ENCODE measurements at regions of chr19 and their contacts with region 1.

Region 1: DNA sequence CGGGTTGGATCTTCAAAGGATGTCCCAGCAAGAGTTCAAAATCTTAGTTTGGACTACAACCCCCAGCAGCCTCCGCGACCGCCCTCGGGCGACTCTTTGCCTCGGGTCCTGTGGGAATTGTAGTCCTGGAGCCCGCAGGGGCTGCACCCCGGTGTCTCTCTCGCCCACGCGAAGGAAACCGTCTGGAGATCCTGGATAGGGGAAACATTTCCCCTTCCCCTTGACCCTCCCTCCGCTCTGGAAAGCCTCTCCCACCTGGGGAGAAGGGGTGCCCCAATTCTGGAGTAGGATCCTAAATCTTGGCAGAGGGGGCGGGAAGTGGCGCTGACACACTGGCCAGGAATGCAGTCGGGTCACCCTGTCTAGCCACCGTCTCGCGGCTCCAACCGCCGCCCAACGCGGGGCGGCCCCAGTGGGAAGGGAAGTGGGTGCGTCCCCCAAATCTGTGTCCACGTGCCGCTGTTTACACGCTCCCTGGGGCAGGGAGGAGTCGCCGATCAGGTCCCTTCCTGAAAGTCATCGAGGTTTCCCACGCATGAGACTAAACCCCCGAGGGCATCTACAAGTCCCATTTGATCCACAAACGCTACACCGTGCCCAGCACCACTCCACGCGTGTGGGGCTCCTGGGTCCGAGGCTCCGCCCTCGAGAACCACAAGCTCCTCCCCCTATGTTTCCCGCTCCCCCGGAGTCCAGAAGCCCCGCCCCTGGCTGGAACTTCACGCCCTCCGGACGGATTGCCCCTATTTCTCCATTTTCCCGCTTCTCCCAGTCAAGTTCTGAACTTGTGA is 761 bp upstream of the PPP1R13L start:
- DNase-seq: peak; percentile 95
- H3K4me3 Mint-ChIP-seq: peak overlapping the region; percentile 92
- H3K27ac Mint-ChIP-seq: peak overlapping the region; percentile 89
- H3K4me1 Mint-ChIP-seq: peaks cover 27% of the 10 kb centered on the region
- H3K27me3 Mint-ChIP-seq: no peaks in the 10 kb centered on the region
- CTCF ChIP-seq: no peak

Region 2: GRCh38 chr19:45391871-45392665 is 13.6 kb before region 1 on chr19:
- CTCF ChIA-PET with region 1: interaction called, 10 read pairs
- intact Hi-C with region 1: no loop called
- DNase-seq: no peak
- H3K4me3 Mint-ChIP-seq: no peak overlapping the region
- H3K27ac Mint-ChIP-seq: peak overlapping the region; percentile 44
- H3K4me1 Mint-ChIP-seq: no peaks in the 10 kb centered on the region
- H3K27me3 Mint-ChIP-seq: no peaks in the 10 kb centered on the region
- CTCF ChIP-seq: no peak

Region 3: DNA sequence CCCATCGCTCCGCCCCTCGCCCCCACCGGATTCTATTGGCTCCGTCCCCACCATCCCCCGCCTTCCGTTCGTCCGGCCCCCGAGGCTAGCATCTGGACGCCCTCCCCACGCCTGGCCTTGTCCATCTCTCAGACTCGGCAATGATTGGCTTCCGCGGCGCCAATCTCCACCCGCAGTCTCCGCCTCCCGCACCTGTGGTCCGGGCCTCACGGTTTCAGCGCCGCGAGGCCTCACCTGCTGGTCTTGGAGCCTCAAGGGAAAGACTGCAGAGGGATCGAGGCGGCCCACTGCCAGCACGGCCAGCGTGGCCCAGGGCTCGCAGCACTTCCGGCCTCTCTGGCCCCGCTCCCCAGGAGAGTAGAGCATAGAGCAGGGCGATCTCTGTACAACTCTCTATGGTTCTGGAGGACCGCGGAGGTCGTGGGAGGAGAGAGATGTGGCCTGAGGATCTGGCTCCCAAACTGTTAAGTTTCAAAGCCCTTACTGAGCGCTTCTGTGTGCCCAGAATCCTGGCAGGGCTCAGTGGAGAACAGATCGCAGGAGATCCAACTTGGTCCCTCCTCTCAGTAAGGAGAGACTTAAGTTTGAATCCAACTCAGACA is 18.1 kb after region 1 on chr19 and contains the start of gene ERCC1:
- CTCF ChIA-PET with region 1: interaction called, 18 read pairs
- intact Hi-C with region 1: loop called (anchors 2 kb)
- DNase-seq: peak; percentile 99
- H3K4me3 Mint-ChIP-seq: peak within 1 kb of the TSS; percentile 77
- H3K27ac Mint-ChIP-seq: peak within 1 kb of the TSS; percentile 85
- H3K4me1 Mint-ChIP-seq: peaks cover 41% of the 10 kb centered on the region
- H3K27me3 Mint-ChIP-seq: no peaks in the 10 kb centered on the region
- CTCF ChIP-seq: no peak
- total RNA-seq, gene ERCC1: 55.7 and 58.9 TPM in 2 replicates

Region 4: DNA sequence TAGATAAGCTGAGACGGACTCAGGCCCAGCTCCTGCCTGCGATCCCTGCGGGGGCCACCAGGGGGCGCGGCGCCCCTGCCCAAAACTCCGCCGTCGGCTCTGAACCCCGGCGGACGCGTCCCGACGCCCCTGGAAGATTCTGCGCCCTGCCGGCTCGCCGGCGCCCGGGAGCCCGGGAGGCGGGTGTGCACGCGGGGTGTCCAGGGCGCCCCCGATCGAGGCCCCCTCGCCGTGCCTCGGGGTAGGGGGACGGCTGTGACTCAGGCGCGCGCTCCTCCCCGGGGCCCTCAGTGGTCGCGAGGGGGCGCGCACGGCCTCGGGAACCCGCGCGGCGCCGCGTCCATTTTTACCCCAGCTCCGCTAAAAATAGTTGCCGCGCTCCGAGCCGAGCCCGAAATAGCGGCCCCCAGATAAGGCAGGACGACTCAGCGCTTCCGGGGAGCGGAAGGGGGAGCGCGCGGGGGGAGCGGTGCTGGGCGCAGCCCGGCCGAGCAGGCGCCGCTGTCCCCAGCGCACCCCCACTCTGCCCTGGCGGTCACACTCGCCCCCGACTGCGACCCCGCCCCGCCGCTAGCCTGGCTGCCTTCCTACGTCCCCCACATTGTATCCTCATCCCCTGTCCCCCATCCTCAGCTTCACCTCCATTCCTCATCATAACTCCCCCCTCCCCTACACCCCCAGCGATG is 34.1 kb after region 1 on chr19:
- CTCF ChIA-PET with region 1: interaction called, 16 read pairs
- intact Hi-C with region 1: no loop called
- DNase-seq: peak; percentile 92
- H3K4me3 Mint-ChIP-seq: peak overlapping the region; percentile 65
- H3K27ac Mint-ChIP-seq: peak overlapping the region; percentile 11
- H3K4me1 Mint-ChIP-seq: peaks cover 40% of the 10 kb centered on the region
- H3K27me3 Mint-ChIP-seq: no peaks in the 10 kb centered on the region
- CTCF ChIP-seq: peak; percentile 100

Region 5: DNA sequence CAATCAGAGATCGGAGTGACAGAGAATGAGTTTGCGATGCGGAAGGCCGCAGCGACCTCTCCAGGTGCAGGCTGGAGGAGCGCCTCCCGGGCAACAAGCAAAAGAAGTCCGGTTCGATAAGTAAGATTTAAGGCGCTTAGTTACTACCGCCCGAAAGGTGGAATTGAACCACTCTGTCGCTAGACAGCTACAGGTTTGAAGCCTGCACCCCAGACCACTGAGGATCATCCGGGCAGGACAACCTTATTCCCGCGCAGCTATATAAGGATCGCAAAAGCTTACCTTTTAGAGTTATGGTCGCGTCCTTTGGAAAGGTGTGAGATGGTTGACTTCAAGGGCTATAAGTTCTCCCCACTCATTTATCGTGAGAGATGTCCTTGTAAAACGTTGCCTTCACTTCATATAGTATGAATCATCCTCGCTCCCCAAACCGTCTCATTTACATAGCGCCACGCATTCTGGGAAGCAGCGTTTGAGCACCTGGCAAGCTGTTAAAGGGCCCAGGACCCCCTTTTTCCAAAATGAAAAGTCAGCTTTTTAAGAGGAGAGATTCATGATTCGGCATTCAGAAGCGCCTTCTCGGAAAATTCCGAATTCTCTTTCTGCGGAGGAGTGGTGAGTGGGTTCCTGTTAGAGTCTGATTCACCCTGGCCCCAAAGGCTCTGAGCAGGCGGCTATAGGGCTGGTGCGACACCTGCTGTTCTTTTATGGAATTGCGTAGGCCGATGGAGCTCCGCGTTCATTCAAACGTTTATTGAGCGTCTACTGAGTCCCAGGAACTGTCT is 73.0 kb after region 1 on chr19:
- CTCF ChIA-PET with region 1: interaction called, 55 read pairs
- intact Hi-C with region 1: loop called (anchors 1 kb)
- DNase-seq: peak; percentile 92
- H3K4me3 Mint-ChIP-seq: peak overlapping the region; percentile 52
- H3K27ac Mint-ChIP-seq: peak overlapping the region; percentile 98
- H3K4me1 Mint-ChIP-seq: peaks cover 31% of the 10 kb centered on the region
- H3K27me3 Mint-ChIP-seq: no peaks in the 10 kb centered on the region
- CTCF ChIP-seq: peak; percentile 99

Region 6: GRCh38 chr19:45485305-45486077 is 79.9 kb after region 1 on chr19:
- CTCF ChIA-PET with region 1: interaction called, 35 read pairs
- intact Hi-C with region 1: no loop called
- DNase-seq: peak; percentile 99
- H3K4me3 Mint-ChIP-seq: peak overlapping the region; percentile 79
- H3K27ac Mint-ChIP-seq: peak overlapping the region; percentile 59
- H3K4me1 Mint-ChIP-seq: peaks cover 10% of the 10 kb centered on the region
- H3K27me3 Mint-ChIP-seq: no peaks in the 10 kb centered on the region
- CTCF ChIP-seq: peak; percentile 82